ENCODE measurements at regions of chr1 and their contacts with region 1.

Region 1: DNA sequence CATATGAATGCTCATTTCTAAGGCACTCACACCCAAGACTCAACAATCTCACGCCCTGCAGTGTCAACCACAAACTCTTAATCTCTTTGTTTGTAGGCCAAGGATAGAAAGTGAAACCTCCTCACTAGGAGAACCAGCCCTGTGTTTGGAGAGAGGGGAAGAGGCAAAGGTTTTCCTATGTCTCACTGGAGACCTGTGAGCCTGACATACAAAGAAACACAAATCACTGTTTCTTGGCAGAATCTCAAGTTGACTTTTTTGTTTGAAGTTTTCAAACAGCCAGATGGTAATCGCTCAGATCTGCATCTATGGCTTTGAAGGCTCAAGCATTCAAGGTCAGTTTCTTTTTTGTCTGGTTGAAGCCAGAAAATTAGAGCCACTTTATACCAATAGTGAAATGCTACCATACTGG is 16.5 kb downstream of the PDZK1 start:
- DNase-seq: peak; percentile 37 to 71
- ATAC-seq: peak; percentile 86 to 96 (median 95)
- H3K4me3 ChIP-seq: no peak overlapping the region
- H3K4me3 Mint-ChIP-seq: peak overlapping the region; percentile 78
- H3K27ac ChIP-seq: peak overlapping the region; percentile 71
- H3K27ac Mint-ChIP-seq: peak overlapping the region; percentile 82 to 91
- H3K4me1 ChIP-seq: peaks cover 46% of the 10 kb centered on the region
- H3K4me1 Mint-ChIP-seq: peaks cover 55 to 56% of the 10 kb centered on the region in 2 donors
- H3K27me3 ChIP-seq: no peaks in the 10 kb centered on the region
- H3K27me3 Mint-ChIP-seq: no peaks in the 10 kb centered on the region
- CTCF ChIP-seq: no peak

Region 2: GRCh38 chr1:145720877-145721671 is 30.4 kb after region 1 on chr1:
- intact Hi-C with region 1: loop called (anchors 1 kb)
- DNase-seq: peak; percentile 83
- ATAC-seq: peak; percentile 72 to 86 (median 76)
- H3K4me3 ChIP-seq: peak overlapping the region; percentile 73
- H3K4me3 Mint-ChIP-seq: peak overlapping the region; percentile 95
- H3K27ac ChIP-seq: peak overlapping the region; percentile 81
- H3K27ac Mint-ChIP-seq: peak overlapping the region; percentile 84 to 92
- H3K4me1 ChIP-seq: peaks cover 54% of the 10 kb centered on the region
- H3K4me1 Mint-ChIP-seq: peaks cover 61 to 65% of the 10 kb centered on the region in 2 donors
- H3K27me3 ChIP-seq: no peaks in the 10 kb centered on the region
- H3K27me3 Mint-ChIP-seq: no peaks in the 10 kb centered on the region
- CTCF ChIP-seq: peak; percentile 89